Activated CD4-positive, alpha-beta T cell treated with anti-CD3 and anti-CD28 coated beads for 36 hours (primary cell): ENCODE measurements at regions of chr3 and their contacts with region 1.

Region 1: DNA sequence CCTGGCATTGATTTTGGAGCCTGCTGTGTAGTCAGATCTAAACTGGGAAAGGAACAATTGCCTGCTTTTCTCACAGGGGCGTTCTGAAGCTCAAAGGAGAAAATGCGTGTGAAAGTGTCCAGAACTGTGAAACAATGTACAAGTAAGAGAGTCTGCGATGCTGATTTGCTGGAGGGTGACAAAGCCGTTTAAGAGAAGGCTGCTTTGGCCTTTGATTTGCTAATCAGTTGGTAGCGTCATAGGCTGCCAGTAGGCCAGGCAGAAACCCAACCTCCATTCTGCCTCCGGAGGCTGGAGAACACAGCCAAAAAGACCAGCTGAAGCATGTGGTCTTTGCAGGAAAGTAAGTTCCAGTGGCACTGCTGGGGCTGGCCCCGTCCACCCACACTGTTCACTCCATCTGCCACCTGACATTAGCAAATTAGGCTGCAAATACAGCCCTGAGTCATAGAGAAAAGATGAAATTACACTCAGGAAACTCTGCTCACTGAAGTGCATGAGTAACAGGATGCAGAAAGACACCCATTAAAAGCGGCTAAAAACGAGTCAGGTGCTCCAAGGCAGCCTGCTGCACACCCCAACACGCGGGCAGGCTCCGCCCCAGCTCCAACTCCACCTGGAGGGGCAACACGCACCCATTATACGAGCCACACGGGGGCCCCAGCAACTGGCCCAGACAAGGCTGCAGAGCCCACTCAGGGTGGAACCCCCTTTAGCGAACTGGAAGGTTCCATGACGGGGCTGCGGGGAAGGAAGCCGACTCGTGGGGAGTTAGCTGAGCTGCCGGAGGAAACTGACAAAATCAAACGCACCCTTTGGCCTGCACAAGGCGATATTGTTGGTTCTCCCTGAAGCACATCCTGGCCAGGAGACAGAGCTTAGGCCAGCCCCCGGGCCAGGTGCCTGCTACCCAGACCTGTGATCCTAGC is 31.6 kb downstream of the ZDHHC19 start:
- DNase-seq: peak; percentile 91
- ATAC-seq: peak; percentile 85
- H3K4me3 Mint-ChIP-seq: peak overlapping the region; percentile 37
- H3K27ac Mint-ChIP-seq: peak overlapping the region; percentile 95
- H3K4me1 Mint-ChIP-seq: peaks cover 54% of the 10 kb centered on the region
- H3K27me3 Mint-ChIP-seq: no peaks in the 10 kb centered on the region

Region 2: GRCh38 chr3:195403852-195404408 is 775.7 kb before region 1 on chr3:
- CTCF ChIA-PET with region 1: no interaction called
- POLR2A ChIA-PET with region 1: no interaction called
- intact Hi-C with region 1: no loop called
- DNase-seq: no peak
- ATAC-seq: no peak
- H3K4me3 Mint-ChIP-seq: no peak overlapping the region
- H3K27ac Mint-ChIP-seq: no peak overlapping the region
- H3K4me1 Mint-ChIP-seq: peaks cover 51% of the 10 kb centered on the region
- H3K27me3 Mint-ChIP-seq: no peaks in the 10 kb centered on the region

Region 3: DNA sequence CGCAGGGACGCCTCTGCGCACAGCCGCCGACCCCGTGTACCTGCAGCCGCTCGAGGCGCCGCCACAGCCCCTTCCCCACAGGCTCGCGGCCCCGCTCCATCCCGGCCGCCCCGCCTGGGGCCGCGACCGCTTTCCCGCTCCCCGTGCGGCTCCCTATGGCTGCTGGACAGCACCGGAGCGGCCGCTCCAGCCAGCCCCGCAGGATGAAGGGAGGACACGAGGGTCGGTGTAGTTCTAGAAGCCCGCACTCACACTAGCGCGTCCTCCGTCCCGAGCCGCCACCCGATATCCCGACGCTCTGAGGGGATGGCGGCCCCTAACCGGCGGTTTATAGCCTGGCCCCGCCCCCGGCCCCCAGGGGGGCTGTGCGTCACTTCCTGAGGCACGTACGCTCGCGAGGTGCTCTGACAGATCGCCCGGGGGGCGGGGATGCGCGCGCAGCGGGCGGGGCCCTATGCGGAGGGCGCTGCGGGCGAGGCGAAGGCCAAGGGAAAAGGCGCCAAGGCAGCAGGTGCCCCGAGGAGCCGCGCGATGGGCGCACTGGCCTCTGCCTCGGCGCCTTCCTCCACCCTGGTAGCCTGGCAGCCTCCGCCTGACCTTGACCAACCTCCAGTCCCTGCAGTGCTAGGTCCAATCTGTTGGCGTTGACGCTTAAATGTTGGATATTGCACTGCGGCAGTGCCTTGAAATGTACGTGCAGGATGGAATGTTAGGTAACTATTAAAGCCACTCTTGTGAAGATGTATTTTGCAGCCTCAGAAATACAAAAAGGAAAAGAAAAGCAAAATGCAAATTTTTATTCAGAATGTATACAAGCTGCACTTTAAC is 97.6 kb before region 1 on chr3 and contains the start of gene TFRC:
- CTCF ChIA-PET with region 1: interaction called, 4 read pairs
- POLR2A ChIA-PET with region 1: interaction called, 3 read pairs
- intact Hi-C with region 1: loop called (anchors 1 kb)
- DNase-seq: peak; percentile 98
- ATAC-seq: peak; percentile 92
- H3K4me3 Mint-ChIP-seq: peak within 1 kb of the TSS; percentile 95
- H3K27ac Mint-ChIP-seq: peak within 1 kb of the TSS; percentile 93
- H3K4me1 Mint-ChIP-seq: peaks cover 30% of the 10 kb centered on the region
- H3K27me3 Mint-ChIP-seq: no peaks in the 10 kb centered on the region
- total RNA-seq, gene TFRC: 373 to 520 TPM

Region 4: DNA sequence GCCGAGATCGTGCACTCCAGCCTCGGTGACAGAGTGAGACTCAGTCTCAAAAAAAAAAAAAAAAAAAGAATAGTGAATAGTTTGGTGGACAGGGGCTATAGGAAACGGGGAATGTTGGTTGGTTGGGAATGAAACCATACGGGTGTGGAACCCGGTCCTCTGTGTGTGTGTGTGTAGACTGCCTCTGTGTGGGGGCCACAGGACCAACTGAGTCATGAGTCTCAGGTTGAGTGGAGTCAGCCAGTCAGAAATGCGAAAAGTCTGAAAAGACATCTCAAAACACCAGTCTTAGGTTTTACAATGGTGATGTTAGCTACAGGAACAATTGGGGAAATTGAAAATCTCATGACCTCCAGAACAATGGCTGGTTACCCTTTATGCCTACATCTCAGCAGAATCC is 12.9 kb before region 1 on chr3:
- CTCF ChIA-PET with region 1: no interaction called
- POLR2A ChIA-PET with region 1: no interaction called
- intact Hi-C with region 1: loop called in 1 of 2 experiments (anchors 1 kb)
- DNase-seq: peak; percentile 71
- ATAC-seq: peak; percentile 95
- H3K4me3 Mint-ChIP-seq: no peak overlapping the region
- H3K27ac Mint-ChIP-seq: peak overlapping the region; percentile 60
- H3K4me1 Mint-ChIP-seq: peaks cover 14% of the 10 kb centered on the region
- H3K27me3 Mint-ChIP-seq: no peaks in the 10 kb centered on the region

Region 5: DNA sequence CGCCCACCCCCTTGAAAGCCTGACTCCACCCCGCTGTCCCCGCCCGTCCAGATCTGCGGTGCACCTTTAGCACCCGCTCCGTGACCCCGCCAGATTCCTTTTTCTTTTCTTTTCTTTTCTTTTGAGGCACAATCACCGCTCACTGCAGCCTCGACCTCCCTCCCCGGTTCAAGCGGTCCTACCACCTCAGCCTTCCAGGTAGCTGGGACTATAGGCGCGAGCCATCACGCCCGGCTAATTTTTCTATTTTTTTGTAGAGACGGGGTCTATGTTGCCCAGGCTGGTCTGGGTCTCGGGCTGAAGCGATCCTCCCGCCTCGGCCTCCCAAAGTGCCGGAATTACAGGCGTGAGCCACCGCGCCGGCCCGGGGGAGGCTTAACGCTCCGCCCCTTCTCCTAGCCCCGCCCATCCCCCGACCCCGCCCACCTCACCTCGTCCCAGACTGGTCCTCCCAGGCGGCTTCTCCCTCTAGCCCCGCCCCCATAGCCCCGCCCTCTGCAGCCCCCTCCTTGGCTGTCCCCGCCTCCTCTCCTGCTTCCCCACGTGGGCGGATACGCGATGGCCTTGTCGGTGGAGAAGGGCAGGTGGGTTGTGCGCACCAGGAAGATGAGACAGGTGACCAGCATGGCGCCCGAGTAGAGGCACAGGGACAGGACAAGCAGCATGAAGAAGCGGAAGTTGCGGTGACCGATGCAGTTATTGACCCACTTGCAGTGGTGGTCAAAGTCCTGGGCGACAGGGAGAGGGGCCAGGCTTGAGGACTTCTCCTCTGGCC is 28.4 kb after region 1 on chr3:
- CTCF ChIA-PET with region 1: no interaction called
- POLR2A ChIA-PET with region 1: no interaction called
- intact Hi-C with region 1: loop called in 1 of 2 experiments (anchors 1 kb)
- DNase-seq: peak; percentile 86
- ATAC-seq: peak; percentile 77
- H3K4me3 Mint-ChIP-seq: peak overlapping the region; percentile 74
- H3K27ac Mint-ChIP-seq: peak overlapping the region; percentile 29
- H3K4me1 Mint-ChIP-seq: peaks cover 11% of the 10 kb centered on the region
- H3K27me3 Mint-ChIP-seq: no peaks in the 10 kb centered on the region

Region 6: GRCh38 chr3:196432137-196432879 is 252.7 kb after region 1 on chr3 and contains the start of gene UBXN7:
- CTCF ChIA-PET with region 1: no interaction called
- POLR2A ChIA-PET with region 1: interaction called, 7 read pairs
- intact Hi-C with region 1: loop called in 1 of 2 experiments (anchors 1 kb)
- DNase-seq: peak; percentile 98
- ATAC-seq: peak; percentile 89
- H3K4me3 Mint-ChIP-seq: peak within 1 kb of the TSS; percentile 79
- H3K27ac Mint-ChIP-seq: peak within 1 kb of the TSS; percentile 95
- H3K4me1 Mint-ChIP-seq: peaks cover 20% of the 10 kb centered on the region
- H3K27me3 Mint-ChIP-seq: no peaks in the 10 kb centered on the region
- total RNA-seq, gene UBXN7: 67.2 to 102 TPM